ENCODE measurements at regions of chr5 and their contacts with region 1.

Region 1: GRCh38 chr5:95961617-95962474 is at the start of gene ELL2:
- DNase-seq: peak; percentile 98
- H3K4me3 ChIP-seq: peak within 1 kb of the TSS; percentile 66 to 94 (median 79)
- H3K27ac ChIP-seq: peak within 1 kb of the TSS; percentile 88
- H3K4me1 ChIP-seq: peaks cover 12% of the 10 kb centered on the region
- H3K27me3 ChIP-seq: no peaks in the 10 kb centered on the region
- CTCF ChIP-seq: no peak
- POLR2A ChIP-seq: peak; percentile 68
- total RNA-seq, gene ELL2: 26.0 and 39.8 TPM in 2 replicates

Region 2: GRCh38 chr5:95471942-95472341 is 489.9 kb before region 1 on chr5:
- CTCF ChIA-PET with region 1: no interaction called
- POLR2A ChIA-PET with region 1: no interaction called
- dilution Hi-C with region 1: no loop called
- intact Hi-C with region 1: no loop called
- DNase-seq: no peak
- H3K4me3 ChIP-seq: no peak overlapping the region
- H3K27ac ChIP-seq: no peak overlapping the region
- H3K4me1 ChIP-seq: no peaks in the 10 kb centered on the region
- H3K27me3 ChIP-seq: no peaks in the 10 kb centered on the region
- CTCF ChIP-seq: no peak
- POLR2A ChIP-seq: no peak

Region 3: DNA sequence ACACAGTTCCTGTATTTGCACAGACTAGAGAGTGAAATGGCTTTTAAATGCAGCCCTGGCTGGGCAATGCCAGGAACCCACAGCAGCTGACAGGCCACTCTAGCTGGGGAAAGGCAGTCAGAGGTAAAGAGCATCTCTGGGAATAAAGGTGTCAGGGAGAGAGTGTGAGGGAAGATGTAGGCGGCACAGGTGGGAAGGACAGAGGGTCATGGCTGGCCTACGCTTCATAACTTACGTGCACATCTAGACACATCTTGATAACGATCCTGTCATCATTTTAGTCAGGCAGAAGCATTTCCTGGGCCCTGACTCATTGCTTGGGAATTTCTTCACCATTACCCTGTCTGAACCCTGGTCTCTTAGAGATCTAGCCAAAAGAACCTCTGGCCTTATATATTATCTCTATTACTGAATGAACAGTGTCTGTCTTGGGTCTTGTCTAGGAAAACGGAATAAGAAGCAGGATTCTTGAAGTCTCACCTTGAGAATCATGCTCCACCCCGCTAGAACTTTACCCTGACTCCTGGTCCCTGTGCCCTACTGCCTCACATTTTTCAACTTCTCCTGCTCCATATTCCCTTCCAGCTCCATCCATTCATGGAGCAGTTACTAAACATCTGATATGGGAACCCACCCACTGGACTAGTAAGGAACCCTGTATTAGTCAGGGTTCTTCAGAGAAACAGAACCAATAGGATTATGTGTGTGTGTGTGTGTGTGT is 106.2 kb after region 1 on chr5:
- CTCF ChIA-PET with region 1: interaction called, 4 read pairs
- POLR2A ChIA-PET with region 1: interaction called, 3 read pairs
- dilution Hi-C with region 1: no loop called
- intact Hi-C with region 1: loop called (anchors 2 kb)
- DNase-seq: peak; percentile 72
- H3K4me3 ChIP-seq: no peak overlapping the region
- H3K27ac ChIP-seq: peak overlapping the region; percentile 90
- H3K4me1 ChIP-seq: peaks cover 38% of the 10 kb centered on the region
- H3K27me3 ChIP-seq: no peaks in the 10 kb centered on the region
- CTCF ChIP-seq: no peak
- POLR2A ChIP-seq: peak; percentile 88

Region 4: GRCh38 chr5:96198356-96199058 is 236.7 kb after region 1 on chr5:
- CTCF ChIA-PET with region 1: no interaction called
- POLR2A ChIA-PET with region 1: no interaction called
- dilution Hi-C with region 1: no loop called
- intact Hi-C with region 1: loop called (anchors 1 kb)
- DNase-seq: peak; percentile 93
- H3K4me3 ChIP-seq: no peak overlapping the region
- H3K27ac ChIP-seq: peak overlapping the region; percentile 40
- H3K4me1 ChIP-seq: peaks cover 16% of the 10 kb centered on the region
- H3K27me3 ChIP-seq: no peaks in the 10 kb centered on the region
- CTCF ChIP-seq: no peak
- POLR2A ChIP-seq: no peak

Region 5: DNA sequence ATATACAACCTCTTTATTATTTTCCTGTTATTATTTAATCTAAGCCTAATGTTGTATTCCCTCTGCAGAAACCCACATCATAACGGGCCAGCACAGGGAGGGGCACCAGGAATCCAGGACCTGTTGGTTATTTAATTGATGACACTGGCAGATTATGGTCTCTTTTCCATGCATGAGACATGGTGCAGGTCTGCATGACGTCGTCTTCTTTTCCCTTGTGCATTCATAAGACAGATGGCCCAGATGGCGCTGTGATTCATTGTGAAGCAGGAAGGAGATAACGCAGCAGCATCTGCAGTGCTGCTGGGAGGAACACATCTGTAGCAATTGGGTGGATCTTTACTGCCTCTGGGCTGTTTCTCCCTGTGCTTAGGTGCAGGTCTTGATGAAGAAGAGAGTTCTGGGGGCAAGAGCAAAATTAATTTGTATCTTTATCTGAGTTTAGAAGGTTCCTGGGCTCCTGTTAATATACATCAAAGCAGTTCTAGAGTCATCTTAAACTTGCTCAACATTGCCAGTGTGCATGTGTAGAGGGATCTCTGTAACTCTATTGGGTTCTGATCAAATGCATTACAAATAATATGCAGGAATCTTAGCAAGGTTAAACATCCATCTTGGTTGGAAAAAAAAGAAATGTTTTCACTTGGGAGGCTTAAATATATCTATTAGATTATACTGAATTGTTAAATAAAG is 295.1 kb after region 1 on chr5:
- CTCF ChIA-PET with region 1: interaction called, 8 read pairs
- POLR2A ChIA-PET with region 1: no interaction called
- dilution Hi-C with region 1: no loop called
- intact Hi-C with region 1: loop called (anchors 1 kb)
- DNase-seq: peak; percentile 64
- H3K4me3 ChIP-seq: no peak overlapping the region
- H3K27ac ChIP-seq: no peak overlapping the region
- H3K4me1 ChIP-seq: peaks cover 55% of the 10 kb centered on the region
- H3K27me3 ChIP-seq: no peaks in the 10 kb centered on the region
- CTCF ChIP-seq: no peak
- POLR2A ChIP-seq: no peak

Region 6: DNA sequence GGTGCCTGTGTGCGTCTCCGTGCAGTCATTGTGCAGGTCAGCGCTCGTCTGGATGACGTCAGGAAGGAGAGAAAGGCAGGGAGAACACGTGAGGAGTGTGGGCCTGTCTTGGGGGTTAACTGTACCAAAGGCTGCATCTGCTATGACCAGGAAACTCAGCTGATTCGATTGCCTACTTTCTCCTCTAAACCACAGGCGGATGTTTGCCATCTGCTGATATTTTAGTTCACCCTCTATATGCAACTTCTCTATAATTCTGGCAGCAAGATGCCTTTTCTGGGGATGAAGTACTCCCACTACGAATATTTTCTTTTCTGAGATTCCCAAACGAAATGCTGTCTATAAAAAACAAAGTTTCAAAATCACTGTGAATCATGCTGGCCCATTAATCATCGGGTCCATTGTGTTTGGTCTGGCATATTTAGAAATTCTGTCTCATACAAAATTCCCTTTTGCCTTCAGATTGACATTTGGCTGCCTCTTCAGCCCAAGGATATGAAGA is 446.5 kb after region 1 on chr5:
- CTCF ChIA-PET with region 1: no interaction called
- POLR2A ChIA-PET with region 1: no interaction called
- dilution Hi-C with region 1: no loop called
- intact Hi-C with region 1: loop called (anchors 5 kb)
- DNase-seq: peak; percentile 89
- H3K4me3 ChIP-seq: no peak overlapping the region
- H3K27ac ChIP-seq: peak overlapping the region; percentile 84
- H3K4me1 ChIP-seq: peaks cover 33% of the 10 kb centered on the region
- H3K27me3 ChIP-seq: no peaks in the 10 kb centered on the region
- CTCF ChIP-seq: no peak
- POLR2A ChIP-seq: no peak